ENCODE measurements at regions of chr2 and their contacts with region 1.

Region 1: GRCh38 chr2:129849559-129850160 is 129.8 kb upstream of the RAB6C start:
- DNase-seq: no peak
- ATAC-seq: peak; percentile 52 to 78
- H3K4me3 ChIP-seq: peak overlapping the region in 1 of 4 donors; percentile 22
- H3K27ac ChIP-seq: no peak overlapping the region
- H3K4me1 ChIP-seq: no peaks in the 10 kb centered on the region
- H3K27me3 ChIP-seq: no peaks in the 10 kb centered on the region
- CTCF ChIP-seq: peak; percentile 50 to 78 (median 58)
- POLR2A ChIP-seq: no peak

Region 2: DNA sequence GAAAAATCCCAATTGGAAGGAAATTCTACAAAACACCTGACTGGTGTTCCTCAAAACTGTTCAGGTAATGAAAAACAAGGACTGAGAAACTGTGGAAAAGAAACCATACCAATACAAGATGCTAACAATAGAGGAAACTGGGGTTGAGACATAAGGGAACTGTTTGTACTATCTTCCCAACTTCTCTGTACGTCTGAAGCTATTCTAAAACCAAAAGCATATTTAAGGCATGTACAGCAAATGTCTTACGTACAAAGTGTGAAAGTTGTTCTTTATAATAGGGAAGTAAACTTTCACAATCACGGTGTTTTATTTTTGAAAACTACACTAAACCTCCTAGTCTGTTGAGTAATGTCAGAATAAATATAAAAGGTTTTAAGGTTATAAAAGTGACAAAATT is 646.3 kb before region 1 on chr2:
- in situ Hi-C with region 1: loop called in 1 of 4 experiments (anchors 25 kb)
- intact Hi-C with region 1: no loop called
- DNase-seq: no peak
- ATAC-seq: no peak
- H3K4me3 ChIP-seq: no peak overlapping the region
- H3K27ac ChIP-seq: no peak overlapping the region
- H3K4me1 ChIP-seq: no peaks in the 10 kb centered on the region
- H3K27me3 ChIP-seq: no peaks in the 10 kb centered on the region
- CTCF ChIP-seq: no peak
- POLR2A ChIP-seq: no peak

Region 3: GRCh38 chr2:131125195-131125757 is 1275.6 kb after region 1 on chr2:
- in situ Hi-C with region 1: no loop called
- intact Hi-C with region 1: no loop called
- DNase-seq: peak in 1 of 2 donors; percentile 22
- ATAC-seq: peak in 1 of 2 donors; percentile 14
- H3K4me3 ChIP-seq: no peak overlapping the region
- H3K27ac ChIP-seq: peak overlapping the region in 3 of 4 donors; percentile 82 to 90 (median 86)
- H3K4me1 ChIP-seq: peaks cover 37 to 38% of the 10 kb centered on the region in 2 donors
- H3K27me3 ChIP-seq: no peaks in the 10 kb centered on the region
- CTCF ChIP-seq: no peak
- POLR2A ChIP-seq: no peak